ENCODE measurements at regions of chr4 and their contacts with region 1.

Region 1: DNA sequence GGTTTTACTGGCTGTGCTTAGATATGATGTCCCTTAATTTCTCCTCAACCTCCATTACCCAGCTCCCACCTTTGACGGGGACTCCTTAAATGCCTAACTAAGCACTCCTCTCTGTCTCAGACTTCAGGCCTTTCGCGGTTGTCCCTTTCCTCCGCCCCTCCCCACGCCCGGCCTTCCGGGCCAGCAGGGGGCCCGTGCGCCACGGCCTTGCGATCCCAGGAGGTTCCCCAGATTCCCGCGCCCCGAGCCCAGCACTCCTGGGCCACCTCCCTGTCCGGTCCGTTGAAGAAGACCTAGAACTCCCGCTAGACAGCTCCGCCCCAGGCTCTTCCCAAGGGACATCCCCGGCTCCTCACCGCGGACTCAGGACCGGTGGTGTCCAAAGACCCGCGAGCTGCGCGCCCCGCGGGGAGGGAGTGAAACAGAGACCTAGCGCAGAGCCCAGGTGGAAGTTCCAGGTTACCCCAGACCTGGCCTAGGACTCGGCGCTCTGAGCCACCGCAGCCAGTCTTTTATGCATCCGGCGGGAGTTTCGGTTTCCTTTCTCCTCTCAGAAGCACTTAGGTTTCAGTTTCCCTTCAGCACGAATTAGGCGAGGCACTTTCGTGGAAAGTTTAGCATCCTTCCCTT is at the start of gene DDX60:
- DNase-seq: peak; percentile 23 to 57
- ATAC-seq: peak; percentile 81 to 96
- H3K4me3 ChIP-seq: peak within 1 kb of the TSS; percentile 73 to 95 (median 92)
- H3K27ac ChIP-seq: peak within 1 kb of the TSS; percentile 86 to 88 (median 87)
- H3K4me1 ChIP-seq: peaks cover 0 to 8% of the 10 kb centered on the region in 2 donors
- H3K27me3 ChIP-seq: no peaks in the 10 kb centered on the region
- CTCF ChIP-seq: peak in 4 of 5 experiments; percentile 11 to 64 (median 41)
- POLR2A ChIP-seq: no peak
- total RNA-seq, gene DDX60: 1.6 to 12.1 (median 3.6) TPM

Region 2: GRCh38 chr4:168408620-168409019 is 90.2 kb after region 1 on chr4:
- in situ Hi-C with region 1: no loop called
- intact Hi-C with region 1: loop called (anchors 5 kb)
- DNase-seq: peak; percentile 71 to 74
- ATAC-seq: peak; percentile 98
- H3K4me3 ChIP-seq: peak overlapping the region in 1 of 4 donors; percentile 3
- H3K27ac ChIP-seq: peak overlapping the region; percentile 69 to 72 (median 71)
- H3K4me1 ChIP-seq: peaks cover 28 to 39% of the 10 kb centered on the region in 2 donors
- H3K27me3 ChIP-seq: no peaks in the 10 kb centered on the region
- CTCF ChIP-seq: no peak
- POLR2A ChIP-seq: peak in 1 of 2 donors; percentile 23

Region 3: GRCh38 chr4:168451744-168452390 is 133.5 kb after region 1 on chr4:
- in situ Hi-C with region 1: no loop called
- intact Hi-C with region 1: loop called (anchors 10 kb)
- DNase-seq: no peak
- ATAC-seq: peak; percentile 54 to 80
- H3K4me3 ChIP-seq: no peak overlapping the region
- H3K27ac ChIP-seq: no peak overlapping the region
- H3K4me1 ChIP-seq: no peaks in the 10 kb centered on the region
- H3K27me3 ChIP-seq: no peaks in the 10 kb centered on the region
- CTCF ChIP-seq: no peak
- POLR2A ChIP-seq: no peak

Measured in gastrocnemius medialis (tissue), 4 donors.